HCT116 (cell line): ENCODE measurements at regions of chr3 and their contacts with region 1.

Region 1: DNA sequence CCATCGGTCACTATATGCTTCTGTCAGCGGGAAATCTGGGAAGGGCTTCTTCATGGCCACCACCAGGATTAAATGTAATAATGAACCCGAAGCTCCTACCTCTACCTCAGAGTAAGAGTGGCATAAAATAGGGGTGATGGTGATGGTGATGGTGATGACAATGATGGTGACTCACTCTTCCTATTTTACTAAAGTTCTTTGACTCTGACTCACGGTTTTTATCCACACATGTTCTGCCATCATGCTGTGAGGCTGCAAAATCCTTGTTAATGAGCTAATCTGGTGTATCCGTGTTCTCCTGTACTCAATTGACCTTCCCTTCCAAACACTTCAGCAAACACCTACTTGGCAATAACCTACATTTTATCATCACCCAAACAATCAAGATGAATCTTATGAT is 18.3 kb upstream of the FOXP1 start:
- DNase-seq: no peak
- ATAC-seq: no peak
- H3K4me3 ChIP-seq: no peak overlapping the region
- H3K27ac ChIP-seq: no peak overlapping the region
- H3K4me1 ChIP-seq: peaks cover 0 to 7% of the 10 kb centered on the region in 2 experiments; a peak in 1 of 4 replicates
- H3K27me3 ChIP-seq: no peaks in the 10 kb centered on the region
- CTCF ChIP-seq: no peak
- POLR2A ChIP-seq: no peak
- RAD21 ChIP-seq: no peak

Region 2: DNA sequence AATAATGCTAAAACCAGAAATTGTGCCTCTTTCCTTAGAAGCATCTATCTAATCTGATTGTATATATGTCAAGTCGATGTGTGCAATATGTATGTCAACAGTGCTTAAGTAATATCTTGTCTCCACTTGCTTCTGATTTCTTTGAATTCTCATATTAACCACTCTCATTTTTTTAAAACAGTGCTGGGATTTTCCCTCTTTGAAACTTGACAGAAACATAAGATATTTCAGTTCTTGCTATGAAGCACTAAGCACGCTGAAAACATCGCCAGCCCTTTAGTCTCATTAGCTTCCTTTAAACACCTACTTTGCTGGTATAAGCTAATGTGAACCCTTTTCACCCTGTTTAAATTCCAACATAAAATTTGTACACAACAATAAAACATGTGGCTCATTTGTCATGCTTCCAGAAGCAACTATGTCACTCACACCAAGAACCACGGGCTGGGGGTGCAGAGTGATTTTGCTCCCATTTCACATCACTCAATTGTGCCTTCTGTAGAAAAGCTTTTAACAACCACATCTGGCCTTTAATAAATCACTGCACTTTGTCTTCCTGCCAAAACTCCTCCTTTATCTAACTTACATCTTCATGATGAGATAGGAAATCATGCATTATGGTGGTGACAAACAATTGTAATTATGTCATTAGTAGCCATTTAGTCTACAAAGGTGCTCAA is 203.5 kb before region 1 on chr3:
- CTCF ChIA-PET with region 1: no interaction called
- POLR2A ChIA-PET with region 1: no interaction called
- RAD21 ChIA-PET with region 1: no interaction called
- intact Hi-C with region 1: no loop called
- DNase-seq: no peak
- ATAC-seq: no peak
- H3K4me3 ChIP-seq: no peak overlapping the region
- H3K27ac ChIP-seq: no peak overlapping the region
- H3K4me1 ChIP-seq: no peaks in the 10 kb centered on the region
- H3K27me3 ChIP-seq: no peaks in the 10 kb centered on the region
- CTCF ChIP-seq: no peak
- POLR2A ChIP-seq: no peak
- RAD21 ChIP-seq: no peak

Region 3: DNA sequence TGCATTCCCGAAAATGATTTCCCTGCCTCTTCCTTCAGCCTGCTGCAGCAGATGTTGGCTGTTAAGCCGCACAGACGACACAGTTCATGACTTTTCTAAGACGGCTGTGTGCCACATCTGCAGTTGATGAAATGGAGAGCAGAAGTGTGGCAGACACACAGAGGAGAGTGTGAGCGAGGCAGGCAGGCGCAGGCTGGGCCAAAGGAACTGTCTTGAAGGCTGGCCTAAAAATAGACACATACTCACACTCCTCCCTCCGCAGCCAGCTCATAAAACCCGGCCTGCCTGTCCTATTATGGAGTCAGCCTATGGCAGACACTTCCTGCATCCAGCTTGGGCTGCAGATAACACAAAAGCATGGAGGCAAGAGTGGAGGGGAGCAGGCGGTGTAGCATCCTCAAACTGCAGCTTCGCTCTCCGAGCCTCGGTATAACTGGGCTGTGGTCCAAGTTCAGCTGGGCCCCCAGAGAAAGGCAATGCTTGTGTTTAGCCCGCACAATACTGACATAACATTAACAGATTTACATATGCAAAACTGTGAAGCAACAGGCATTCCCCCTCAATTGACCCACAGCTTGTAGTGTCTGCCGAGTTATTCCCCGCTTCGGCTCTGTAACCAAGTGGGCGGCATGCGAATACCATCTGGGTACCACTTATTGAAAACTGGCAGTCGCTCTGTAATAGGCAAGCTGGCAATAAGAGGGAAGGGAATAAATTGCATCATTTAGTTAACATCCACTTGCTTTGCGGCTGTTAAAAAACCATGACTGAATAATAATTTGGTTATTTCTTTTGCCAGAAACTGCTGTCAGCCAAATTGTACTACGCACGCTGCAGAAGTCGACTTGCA is 59.1 kb before region 1 on chr3:
- CTCF ChIA-PET with region 1: no interaction called
- POLR2A ChIA-PET with region 1: no interaction called
- RAD21 ChIA-PET with region 1: no interaction called
- intact Hi-C with region 1: loop called (anchors 10 kb)
- DNase-seq: no peak
- ATAC-seq: no peak
- H3K4me3 ChIP-seq: no peak overlapping the region
- H3K27ac ChIP-seq: no peak overlapping the region
- H3K4me1 ChIP-seq: peaks cover 0 to 9% of the 10 kb centered on the region in 2 experiments; a peak in 3 of 4 replicates
- H3K27me3 ChIP-seq: no peaks in the 10 kb centered on the region
- CTCF ChIP-seq: no peak
- POLR2A ChIP-seq: no peak
- RAD21 ChIP-seq: no peak